ENCODE measurements at regions of chr11 and their contacts with region 1.

Region 1: GRCh38 chr11:91527380-91528030 is 697.1 kb upstream of the FAT3 start:
- DNase-seq: no peak
- ATAC-seq: no peak
- H3K4me3 ChIP-seq: no peak overlapping the region
- H3K27ac ChIP-seq: no peak overlapping the region
- H3K4me1 ChIP-seq: no peaks in the 10 kb centered on the region
- H3K27me3 ChIP-seq: no peaks in the 10 kb centered on the region

Region 2: DNA sequence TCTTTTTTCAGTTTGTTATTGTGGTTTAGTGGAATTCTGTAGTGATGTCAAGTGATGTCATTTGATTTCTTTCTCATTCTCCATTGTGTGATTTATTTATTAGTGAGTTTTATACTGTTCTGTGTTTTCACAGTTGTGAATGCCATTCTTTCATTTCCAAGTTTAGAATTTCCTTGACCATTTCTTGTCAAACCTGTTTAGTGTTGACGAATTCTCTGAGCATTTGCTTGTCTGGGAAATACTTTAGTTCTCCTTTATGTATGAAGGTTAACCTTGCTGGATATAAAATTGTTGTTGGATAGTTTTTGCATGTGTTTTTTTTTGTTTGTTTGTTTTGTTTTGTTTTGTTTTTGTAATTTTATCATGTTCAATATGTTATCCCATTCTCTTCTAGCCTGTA is 63.5 kb after region 1 on chr11:
- intact Hi-C with region 1: loop called in 1 of 4 experiments (anchors 10 kb)
- DNase-seq: no peak
- ATAC-seq: no peak
- H3K4me3 ChIP-seq: no peak overlapping the region
- H3K27ac ChIP-seq: no peak overlapping the region
- H3K4me1 ChIP-seq: no peaks in the 10 kb centered on the region
- H3K27me3 ChIP-seq: no peaks in the 10 kb centered on the region

Measured in right cardiac atrium (tissue), 5 donors.